Right lobe of liver (tissue), 6 donors: ENCODE measurements at regions of chr19 and their contacts with region 1.

Region 1: DNA sequence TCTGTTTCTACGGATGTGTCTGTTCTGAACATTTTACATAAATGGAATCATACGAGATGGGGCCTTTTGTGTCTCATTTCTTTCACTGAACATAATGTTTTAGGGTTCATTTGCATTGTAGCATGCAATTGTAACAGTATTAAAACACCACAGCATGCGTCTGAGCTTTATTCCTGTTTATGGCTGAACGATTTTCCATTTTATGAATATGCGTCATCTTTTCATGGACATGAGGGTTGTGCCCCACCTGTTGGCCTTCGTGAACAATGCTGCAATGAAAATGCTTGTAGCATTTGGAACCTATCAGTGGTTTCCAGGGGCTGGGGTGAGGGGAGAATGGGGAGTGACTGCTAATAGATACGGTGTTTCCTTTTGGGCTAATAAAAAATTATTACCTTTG is 5.1 kb downstream of the OR10H1 start:
- DNase-seq: no peak
- ATAC-seq: peak in 2 of 4 donors; percentile 40 to 49
- H3K4me3 ChIP-seq: no peak overlapping the region
- H3K27ac ChIP-seq: no peak overlapping the region
- H3K4me1 ChIP-seq: no peaks in the 10 kb centered on the region
- H3K27me3 ChIP-seq: no peaks in the 10 kb centered on the region
- CTCF ChIP-seq: peak; percentile 33 to 44 (median 38)
- POLR2A ChIP-seq: no peak

Region 2: GRCh38 chr19:15614507-15615379 is 195.6 kb before region 1 on chr19 and contains the start of gene CYP4F8:
- intact Hi-C with region 1: loop called in 1 of 2 experiments (anchors 5 kb)
- DNase-seq: no peak
- ATAC-seq: peak in 2 of 4 donors; percentile 18 to 29
- H3K4me3 ChIP-seq: no peak within 1 kb of the TSS
- H3K27ac ChIP-seq: no peak within 1 kb of the TSS
- H3K4me1 ChIP-seq: no peaks in the 10 kb centered on the region
- H3K27me3 ChIP-seq: no peaks in the 10 kb centered on the region
- CTCF ChIP-seq: no peak
- POLR2A ChIP-seq: no peak
- total RNA-seq, gene CYP4F8: not detected